Caco-2 (cell line): ENCODE measurements at regions of chr6 and their contacts with region 1.

Region 1: DNA sequence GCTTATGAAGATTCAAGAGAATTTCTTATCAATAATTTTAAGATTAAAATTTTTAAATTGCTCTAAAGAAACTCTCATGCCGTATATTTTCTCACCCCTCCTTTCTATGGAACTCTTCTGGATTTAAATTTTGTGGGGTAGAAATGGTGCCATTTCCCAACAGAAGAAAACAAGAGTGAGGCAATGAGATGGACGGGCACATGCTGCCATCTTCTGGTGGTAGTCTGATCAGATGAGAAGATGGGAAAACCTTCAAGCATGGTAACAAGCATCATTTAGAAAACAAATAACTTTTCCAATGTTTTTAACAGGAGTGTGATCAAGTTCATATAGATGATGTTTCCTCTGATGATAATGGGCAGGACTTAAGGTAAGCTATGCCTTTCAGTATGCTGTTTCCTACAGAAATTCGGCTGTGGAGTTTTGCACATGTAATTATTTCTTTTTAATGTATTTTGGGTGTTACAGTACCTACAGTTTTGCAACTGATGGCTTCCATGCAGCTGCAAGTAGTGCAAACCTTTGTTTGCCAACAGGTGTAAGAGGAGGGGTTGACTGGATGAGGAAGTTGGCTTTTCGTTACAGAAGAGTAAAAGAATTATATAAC is 271.4 kb downstream of the EYA4 start:
- DNase-seq: peak in 1 of 2 experiments; percentile 50
- H3K4me3 ChIP-seq: no peak overlapping the region
- H3K4me3 Mint-ChIP-seq: no peak overlapping the region
- H3K27ac Mint-ChIP-seq: no peak overlapping the region
- H3K4me1 ChIP-seq: no peaks in the 10 kb centered on the region
- H3K4me1 Mint-ChIP-seq: no peaks in the 10 kb centered on the region
- H3K27me3 ChIP-seq: no peaks in the 10 kb centered on the region
- H3K27me3 Mint-ChIP-seq: peaks cover 2% of the 10 kb centered on the region
- CTCF ChIP-seq: peak; percentile 57 to 63

Region 2: DNA sequence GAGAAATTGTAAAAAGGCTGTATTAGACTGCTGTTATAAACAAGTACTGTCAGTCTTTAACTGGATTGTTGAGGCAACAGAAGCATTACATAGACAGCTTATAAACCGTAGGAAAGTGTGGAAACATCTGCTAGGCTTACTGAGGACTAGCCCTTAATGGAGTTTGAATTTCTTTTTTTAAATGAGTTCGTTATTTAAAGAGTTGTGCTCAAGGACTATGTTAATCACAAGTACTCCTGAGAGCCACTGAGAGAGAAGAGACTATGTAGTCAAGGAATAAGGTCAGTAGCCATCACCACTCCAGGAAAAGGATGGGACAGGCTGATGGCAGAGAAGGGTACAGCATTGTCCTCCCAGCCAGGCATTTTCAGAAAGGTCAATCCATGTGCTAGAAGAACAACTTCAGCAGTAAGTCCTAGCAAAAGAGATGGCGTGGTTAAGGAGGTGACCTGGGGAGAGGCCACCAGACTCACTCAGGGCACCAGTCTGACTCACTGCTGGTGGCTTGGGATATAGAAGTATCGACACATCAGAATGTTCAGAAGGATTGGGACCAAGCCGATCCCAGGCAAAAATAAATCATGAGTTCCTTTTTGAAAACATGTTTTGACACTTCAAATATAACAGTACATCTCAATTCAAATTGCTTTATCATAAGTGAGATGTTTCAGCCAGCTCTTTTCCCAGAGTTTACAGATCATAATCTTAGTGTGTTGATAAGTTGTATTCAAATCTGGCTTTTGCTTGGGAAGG is 691.7 kb before region 1 on chr6:
- CTCF ChIA-PET with region 1: no interaction called
- POLR2A ChIA-PET with region 1: no interaction called
- intact Hi-C with region 1: loop called (anchors 2 kb)
- DNase-seq: peak in 1 of 2 experiments; percentile 38
- H3K4me3 ChIP-seq: no peak overlapping the region
- H3K4me3 Mint-ChIP-seq: peak overlapping the region; percentile 20
- H3K27ac Mint-ChIP-seq: peak overlapping the region; percentile 71
- H3K4me1 ChIP-seq: no peaks in the 10 kb centered on the region; the same call in none of the 2 replicates
- H3K4me1 Mint-ChIP-seq: peaks cover 17% of the 10 kb centered on the region
- H3K27me3 ChIP-seq: no peaks in the 10 kb centered on the region
- H3K27me3 Mint-ChIP-seq: no peaks in the 10 kb centered on the region
- CTCF ChIP-seq: no peak

Region 3: GRCh38 chr6:132830334-132830751 is 682.2 kb before region 1 on chr6:
- CTCF ChIA-PET with region 1: no interaction called
- POLR2A ChIA-PET with region 1: no interaction called
- intact Hi-C with region 1: loop called (anchors 1 kb)
- DNase-seq: peak in 1 of 2 experiments; percentile 39
- H3K4me3 ChIP-seq: no peak overlapping the region
- H3K4me3 Mint-ChIP-seq: no peak overlapping the region
- H3K27ac Mint-ChIP-seq: no peak overlapping the region
- H3K4me1 ChIP-seq: no peaks in the 10 kb centered on the region
- H3K4me1 Mint-ChIP-seq: no peaks in the 10 kb centered on the region
- H3K27me3 ChIP-seq: no peaks in the 10 kb centered on the region
- H3K27me3 Mint-ChIP-seq: peaks cover 1% of the 10 kb centered on the region
- CTCF ChIP-seq: peak; percentile 32 to 55

Region 4: GRCh38 chr6:132962936-132963868 is 549.3 kb before region 1 on chr6:
- CTCF ChIA-PET with region 1: no interaction called
- POLR2A ChIA-PET with region 1: no interaction called
- intact Hi-C with region 1: loop called (anchors 1 kb)
- DNase-seq: peak; percentile 69 to 81
- H3K4me3 ChIP-seq: no peak overlapping the region
- H3K4me3 Mint-ChIP-seq: no peak overlapping the region
- H3K27ac Mint-ChIP-seq: no peak overlapping the region
- H3K4me1 ChIP-seq: no peaks in the 10 kb centered on the region
- H3K4me1 Mint-ChIP-seq: no peaks in the 10 kb centered on the region
- H3K27me3 ChIP-seq: no peaks in the 10 kb centered on the region
- H3K27me3 Mint-ChIP-seq: peaks cover 6% of the 10 kb centered on the region
- CTCF ChIP-seq: peak; percentile 87 to 88

Region 5: DNA sequence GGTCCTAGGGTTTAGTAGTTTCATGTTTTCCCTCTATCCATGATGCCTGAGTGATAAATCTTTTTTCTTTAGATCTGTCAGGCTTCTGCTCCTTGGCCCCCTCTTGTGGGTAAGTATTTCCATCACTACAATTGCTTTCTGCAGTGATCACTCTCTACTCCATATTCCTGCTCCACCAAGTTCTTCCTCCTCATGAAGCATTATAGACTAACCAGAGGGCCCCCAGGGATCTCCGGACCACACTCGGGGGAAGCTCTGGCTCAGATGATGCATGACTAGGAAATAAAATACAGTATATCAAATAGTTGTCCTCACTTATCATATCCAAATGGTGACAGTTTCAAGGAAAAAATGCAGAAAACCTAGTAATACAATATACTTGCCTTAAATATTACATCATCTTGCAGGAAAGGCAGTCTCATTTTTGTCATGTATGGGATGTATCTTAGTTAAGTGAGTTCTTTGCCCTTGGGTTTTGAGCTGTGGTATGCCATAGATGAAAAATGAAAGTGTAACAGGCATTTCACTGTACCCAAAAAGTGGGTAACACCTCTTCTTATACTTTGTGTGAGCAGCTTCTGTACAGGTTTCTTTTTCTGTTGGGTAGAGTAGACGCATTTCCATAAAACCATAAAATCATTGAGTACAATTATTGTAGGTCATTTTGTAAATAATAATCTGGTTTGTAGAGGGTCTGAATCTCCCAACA is 472.3 kb before region 1 on chr6:
- CTCF ChIA-PET with region 1: no interaction called
- POLR2A ChIA-PET with region 1: no interaction called
- intact Hi-C with region 1: loop called (anchors 10 kb)
- DNase-seq: peak in 1 of 2 experiments; percentile 38
- H3K4me3 ChIP-seq: no peak overlapping the region
- H3K4me3 Mint-ChIP-seq: no peak overlapping the region
- H3K27ac Mint-ChIP-seq: no peak overlapping the region
- H3K4me1 ChIP-seq: no peaks in the 10 kb centered on the region
- H3K4me1 Mint-ChIP-seq: no peaks in the 10 kb centered on the region
- H3K27me3 ChIP-seq: no peaks in the 10 kb centered on the region
- H3K27me3 Mint-ChIP-seq: no peaks in the 10 kb centered on the region
- CTCF ChIP-seq: peak; percentile 27 to 55

Region 6: DNA sequence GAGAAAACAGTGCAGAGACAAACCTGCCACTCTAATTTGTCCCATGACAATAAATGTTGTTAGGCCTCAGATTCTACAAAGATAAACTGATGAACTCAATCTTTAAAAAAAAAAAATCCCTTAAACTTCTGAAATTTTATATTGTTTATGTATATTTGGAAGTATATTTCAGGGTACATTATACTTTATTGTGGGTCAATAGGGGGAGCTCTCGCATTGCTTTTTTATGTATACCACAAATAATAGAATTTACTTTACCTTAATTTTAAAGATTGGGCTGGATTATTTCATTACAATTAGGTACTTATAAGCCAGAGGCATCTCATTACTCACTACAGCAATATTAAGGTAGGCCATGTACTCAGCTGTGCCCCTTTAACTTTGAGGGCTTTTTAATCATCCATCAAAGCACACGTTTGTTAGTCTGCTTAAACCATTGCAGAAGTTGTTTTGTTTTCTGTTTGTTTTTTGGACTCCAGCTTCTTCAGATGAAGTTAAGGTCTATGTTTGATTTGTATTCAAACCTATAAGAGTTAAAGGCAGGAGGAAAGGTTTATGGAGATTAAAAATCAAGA is 327.6 kb before region 1 on chr6:
- CTCF ChIA-PET with region 1: no interaction called
- POLR2A ChIA-PET with region 1: no interaction called
- intact Hi-C with region 1: loop called (anchors 1 kb)
- DNase-seq: no peak
- H3K4me3 ChIP-seq: no peak overlapping the region
- H3K4me3 Mint-ChIP-seq: no peak overlapping the region
- H3K27ac Mint-ChIP-seq: no peak overlapping the region
- H3K4me1 ChIP-seq: peaks cover 16% of the 10 kb centered on the region; the same call in 1 of the 2 replicates
- H3K4me1 Mint-ChIP-seq: no peaks in the 10 kb centered on the region
- H3K27me3 ChIP-seq: no peaks in the 10 kb centered on the region
- H3K27me3 Mint-ChIP-seq: no peaks in the 10 kb centered on the region
- CTCF ChIP-seq: peak; percentile 38 to 40

Region 7: GRCh38 chr6:133286765-133287164 is 225.7 kb before region 1 on chr6:
- CTCF ChIA-PET with region 1: no interaction called
- POLR2A ChIA-PET with region 1: no interaction called
- intact Hi-C with region 1: loop called (anchors 2 kb)
- DNase-seq: peak in 1 of 2 experiments; percentile 16
- H3K4me3 ChIP-seq: no peak overlapping the region
- H3K4me3 Mint-ChIP-seq: no peak overlapping the region
- H3K27ac Mint-ChIP-seq: no peak overlapping the region
- H3K4me1 ChIP-seq: no peaks in the 10 kb centered on the region
- H3K4me1 Mint-ChIP-seq: no peaks in the 10 kb centered on the region
- H3K27me3 ChIP-seq: no peaks in the 10 kb centered on the region
- H3K27me3 Mint-ChIP-seq: peaks cover 5% of the 10 kb centered on the region
- CTCF ChIP-seq: peak; percentile 24 to 38